ENCODE measurements at regions of chr10 and their contacts with region 1.

Region 1: GRCh38 chr10:30170824-30171223 is 111.4 kb upstream of the JCAD start:
- DNase-seq: no peak
- H3K4me3 ChIP-seq: no peak overlapping the region
- H3K4me3 Mint-ChIP-seq: no peak overlapping the region
- H3K27ac Mint-ChIP-seq: peak overlapping the region; percentile 77
- H3K4me1 ChIP-seq: peaks cover 23% of the 10 kb centered on the region
- H3K4me1 Mint-ChIP-seq: peaks cover 33% of the 10 kb centered on the region
- H3K27me3 ChIP-seq: no peaks in the 10 kb centered on the region
- H3K27me3 Mint-ChIP-seq: no peaks in the 10 kb centered on the region
- CTCF ChIP-seq: no peak

Region 2: DNA sequence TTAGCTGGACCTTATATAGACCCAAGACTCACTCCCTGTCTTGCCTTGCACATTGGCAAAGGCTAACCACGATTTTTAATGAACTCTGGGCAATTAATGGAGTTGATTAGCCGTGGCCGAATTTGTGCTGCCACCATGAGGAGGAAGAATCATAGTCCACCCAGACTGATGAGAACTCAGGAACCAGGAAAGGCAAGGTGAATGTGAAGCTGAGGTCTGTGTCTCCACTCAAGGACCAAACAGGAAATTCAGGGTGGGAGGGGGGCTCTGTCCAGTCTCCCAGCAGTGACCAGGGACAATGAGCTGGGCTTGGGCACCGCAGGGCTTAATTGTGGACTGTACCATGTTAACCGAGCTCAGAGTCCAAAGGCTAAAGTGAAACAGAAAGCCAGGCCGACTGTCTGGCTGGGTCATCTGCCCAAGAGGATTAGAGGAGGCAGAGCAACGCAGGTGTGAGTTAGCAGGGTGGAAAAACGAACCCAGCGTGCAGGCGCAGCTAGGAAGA is 15.6 kb after region 1 on chr10:
- CTCF ChIA-PET with region 1: no interaction called
- POLR2A ChIA-PET with region 1: no interaction called
- intact Hi-C with region 1: loop called (anchors 1 kb)
- DNase-seq: peak; percentile 29 to 54
- H3K4me3 ChIP-seq: no peak overlapping the region
- H3K4me3 Mint-ChIP-seq: no peak overlapping the region
- H3K27ac Mint-ChIP-seq: peak overlapping the region; percentile 60
- H3K4me1 ChIP-seq: peaks cover 66% of the 10 kb centered on the region
- H3K4me1 Mint-ChIP-seq: peaks cover 61% of the 10 kb centered on the region
- H3K27me3 ChIP-seq: no peaks in the 10 kb centered on the region
- H3K27me3 Mint-ChIP-seq: no peaks in the 10 kb centered on the region
- CTCF ChIP-seq: no peak

Region 3: GRCh38 chr10:30309401-30309800 is 138.6 kb after region 1 on chr10:
- CTCF ChIA-PET with region 1: no interaction called
- POLR2A ChIA-PET with region 1: no interaction called
- intact Hi-C with region 1: no loop called
- DNase-seq: no peak
- H3K4me3 ChIP-seq: no peak overlapping the region
- H3K4me3 Mint-ChIP-seq: no peak overlapping the region
- H3K27ac Mint-ChIP-seq: no peak overlapping the region
- H3K4me1 ChIP-seq: no peaks in the 10 kb centered on the region
- H3K4me1 Mint-ChIP-seq: no peaks in the 10 kb centered on the region
- H3K27me3 ChIP-seq: no peaks in the 10 kb centered on the region
- H3K27me3 Mint-ChIP-seq: no peaks in the 10 kb centered on the region
- CTCF ChIP-seq: no peak

Region 4: DNA sequence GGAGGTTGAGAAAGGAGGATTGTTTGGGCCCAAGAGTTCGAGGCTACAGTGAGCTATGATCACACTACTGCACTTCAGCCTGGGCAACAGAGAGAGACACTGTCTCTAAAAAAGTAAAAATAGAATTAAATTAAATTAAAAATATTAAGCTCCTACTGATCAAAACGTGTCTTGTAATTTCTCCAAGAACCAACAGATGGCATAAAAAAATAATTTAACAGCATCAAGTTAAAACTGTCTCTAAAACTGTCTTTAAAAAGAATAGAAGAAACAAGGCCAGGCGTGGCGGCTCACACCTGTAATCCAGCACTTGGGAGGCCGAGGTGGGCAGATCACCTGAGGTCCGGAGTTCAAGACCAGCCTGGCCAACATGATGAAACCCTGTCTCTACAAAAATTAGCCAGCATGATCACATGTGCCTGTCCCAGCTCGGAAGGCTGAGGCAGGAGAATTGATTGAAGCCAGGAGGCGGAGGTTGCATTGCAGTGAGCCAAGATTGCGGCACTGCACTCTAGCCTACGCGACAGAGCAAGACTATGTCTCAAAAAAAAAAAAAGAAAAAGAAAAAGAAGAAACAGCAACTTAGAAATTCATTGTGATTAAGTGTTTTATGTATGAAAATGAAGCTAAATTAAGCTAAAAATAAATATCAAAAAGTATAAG is 153.8 kb after region 1 on chr10:
- CTCF ChIA-PET with region 1: no interaction called
- POLR2A ChIA-PET with region 1: no interaction called
- intact Hi-C with region 1: no loop called
- DNase-seq: no peak
- H3K4me3 ChIP-seq: no peak overlapping the region
- H3K4me3 Mint-ChIP-seq: no peak overlapping the region
- H3K27ac Mint-ChIP-seq: no peak overlapping the region
- H3K4me1 ChIP-seq: no peaks in the 10 kb centered on the region
- H3K4me1 Mint-ChIP-seq: no peaks in the 10 kb centered on the region
- H3K27me3 ChIP-seq: no peaks in the 10 kb centered on the region
- H3K27me3 Mint-ChIP-seq: no peaks in the 10 kb centered on the region
- CTCF ChIP-seq: no peak